Posterior vena cava (tissue), 2 donors: ENCODE measurements at regions of chr9 and their contacts with region 1.

Region 1: DNA sequence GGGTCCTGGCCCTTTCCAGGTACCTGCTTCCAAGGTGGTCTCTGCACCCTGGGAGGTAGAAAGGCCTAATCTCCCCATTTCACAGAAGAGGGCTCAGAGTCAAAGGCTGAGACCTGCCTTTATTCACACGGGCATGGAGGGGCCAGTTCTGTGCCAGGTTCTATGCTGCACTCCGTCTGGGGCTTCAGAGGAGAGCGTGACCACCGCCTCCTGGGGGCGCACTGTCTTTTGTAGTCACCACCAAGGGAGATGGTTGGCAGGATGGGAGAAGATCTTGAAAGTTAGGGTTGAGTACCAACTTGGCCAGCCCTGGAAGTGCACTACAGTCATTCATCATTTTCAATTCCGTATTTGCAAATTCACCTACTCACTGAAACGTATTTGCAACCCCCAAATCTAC is 23.7 kb upstream of the PRDM12 start:
- DNase-seq: no peak

Region 2: DNA sequence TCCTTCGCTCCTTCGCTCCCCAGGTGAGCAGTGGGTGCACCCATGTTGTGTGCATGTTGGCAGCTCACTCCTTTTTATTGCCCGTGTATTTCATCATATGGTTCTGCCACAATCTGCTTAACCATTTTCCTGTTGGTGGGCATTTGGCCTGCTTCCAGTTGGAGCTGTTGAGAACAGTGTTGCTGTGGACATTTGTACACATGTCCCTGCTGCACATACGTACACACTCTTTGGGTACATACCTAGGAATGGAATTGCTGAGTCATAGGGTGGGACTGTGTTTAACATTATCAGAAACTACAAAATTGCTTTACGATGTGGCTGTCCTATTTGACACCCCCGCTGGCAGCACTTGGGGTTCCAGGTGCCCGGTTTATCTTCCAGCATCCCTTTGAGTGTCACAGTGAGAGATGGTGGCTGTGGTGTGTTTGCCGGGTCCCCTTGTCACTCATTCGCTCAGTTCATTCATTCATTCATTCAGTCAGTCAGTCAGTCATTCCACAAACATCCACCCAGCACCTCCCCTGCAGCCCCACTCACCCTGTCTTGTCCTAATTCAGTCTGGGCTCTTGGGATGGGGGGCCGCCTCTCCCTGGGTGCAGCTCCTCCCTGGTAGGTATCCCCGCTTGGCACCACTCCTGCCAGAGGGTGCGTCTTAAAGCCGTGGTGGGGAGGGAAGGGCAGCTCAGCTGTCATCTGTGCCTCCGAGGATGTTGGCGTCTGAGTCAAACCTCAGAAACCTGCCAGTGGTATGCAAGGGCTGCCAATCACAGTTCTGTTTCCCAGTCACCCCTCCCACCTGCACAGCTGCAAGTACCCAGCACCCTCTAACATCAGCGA is 306.3 kb after region 1 on chr9:
- intact Hi-C with region 1: loop called in 1 of 2 experiments (anchors 5 kb)
- DNase-seq: no peak